ENCODE measurements at regions of chr10 and their contacts with region 1.

Region 1: GRCh38 chr10:73576178-73576889 is 14.8 kb downstream of the USP54 start:
- DNase-seq: peak; percentile 52 to 59
- ATAC-seq: peak; percentile 82 to 85
- H3K4me3 ChIP-seq: peak overlapping the region; percentile 56 to 83 (median 68)
- H3K27ac ChIP-seq: peak overlapping the region; percentile 86 to 91 (median 88)
- H3K4me1 ChIP-seq: peaks cover 34 to 36% of the 10 kb centered on the region in 2 donors
- H3K27me3 ChIP-seq: no peaks in the 10 kb centered on the region
- CTCF ChIP-seq: no peak
- POLR2A ChIP-seq: peak; percentile 92 to 96

Region 2: GRCh38 chr10:73529089-73529832 is 47.1 kb before region 1 on chr10:
- in situ Hi-C with region 1: no loop called
- intact Hi-C with region 1: loop called (anchors 2 kb)
- DNase-seq: peak; percentile 15 to 65
- ATAC-seq: peak; percentile 67 to 91
- H3K4me3 ChIP-seq: no peak overlapping the region
- H3K27ac ChIP-seq: peak overlapping the region; percentile 51 to 78 (median 58)
- H3K4me1 ChIP-seq: peaks cover 18 to 25% of the 10 kb centered on the region in 2 donors
- H3K27me3 ChIP-seq: no peaks in the 10 kb centered on the region
- CTCF ChIP-seq: peak; percentile 77 to 89 (median 86)
- POLR2A ChIP-seq: no peak

Region 3: DNA sequence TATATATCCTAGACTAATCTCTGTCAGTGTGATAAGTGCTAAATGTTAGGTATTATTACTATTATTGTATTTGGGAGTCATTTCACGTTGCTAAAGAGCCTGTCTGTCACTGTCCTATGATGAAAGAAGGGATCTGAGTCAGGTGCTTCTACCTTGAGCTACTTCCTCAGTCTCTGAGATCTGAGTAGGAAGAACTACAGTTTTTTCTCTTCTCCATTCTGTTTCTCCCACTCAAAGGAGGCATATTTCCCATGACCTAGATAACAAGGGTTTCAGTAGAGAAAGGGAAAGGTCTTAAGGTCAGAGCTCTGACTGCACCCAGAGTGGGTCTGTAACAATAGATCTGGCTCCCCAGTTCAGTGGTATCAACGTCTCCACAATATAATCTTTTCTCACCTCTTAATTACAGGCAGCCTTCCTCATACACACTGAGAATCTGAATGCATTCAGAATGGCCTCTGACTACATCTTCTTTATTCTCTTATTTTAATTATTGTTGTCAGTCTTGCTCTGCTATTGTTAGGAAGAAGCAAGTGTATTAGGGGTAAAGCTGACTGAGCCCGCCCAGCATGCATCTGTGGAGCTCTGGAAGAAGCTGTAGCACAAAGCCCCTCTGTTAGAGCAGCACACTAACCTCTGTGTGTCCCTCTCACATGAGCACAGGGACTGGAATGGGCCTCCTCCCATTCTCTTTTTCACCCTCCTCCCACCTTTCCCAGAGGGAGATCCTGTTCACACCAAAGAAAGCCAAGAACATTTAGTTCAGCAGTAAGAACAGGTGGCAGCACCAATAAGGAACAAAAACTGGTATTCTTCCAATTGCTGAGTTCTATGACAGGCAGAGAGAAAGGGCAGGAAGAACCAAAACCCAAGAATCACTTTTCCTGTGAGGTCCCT is 23.3 kb before region 1 on chr10:
- in situ Hi-C with region 1: no loop called
- intact Hi-C with region 1: loop called (anchors 1 kb)
- DNase-seq: peak; percentile 73 to 87
- ATAC-seq: peak; percentile 94
- H3K4me3 ChIP-seq: peak overlapping the region; percentile 30 to 45 (median 40)
- H3K27ac ChIP-seq: peak overlapping the region; percentile 95 to 98 (median 97)
- H3K4me1 ChIP-seq: peaks cover 64 to 85% of the 10 kb centered on the region in 2 donors
- H3K27me3 ChIP-seq: no peaks in the 10 kb centered on the region
- CTCF ChIP-seq: no peak
- POLR2A ChIP-seq: peak; percentile 56 to 61

Region 4: GRCh38 chr10:73625884-73626752 is 49.8 kb after region 1 on chr10:
- in situ Hi-C with region 1: loop called in 1 of 4 experiments (anchors 10 kb)
- intact Hi-C with region 1: loop called (anchors 2 kb)
- DNase-seq: peak; percentile 89 to 94
- ATAC-seq: peak; percentile 97 to 99
- H3K4me3 ChIP-seq: peak overlapping the region; percentile 61 to 98 (median 90)
- H3K27ac ChIP-seq: peak overlapping the region; percentile 79 to 96 (median 83)
- H3K4me1 ChIP-seq: peaks cover 14 to 17% of the 10 kb centered on the region in 2 donors
- H3K27me3 ChIP-seq: no peaks in the 10 kb centered on the region
- CTCF ChIP-seq: no peak
- POLR2A ChIP-seq: peak in 1 of 2 donors; percentile 54

Region 5: GRCh38 chr10:73634421-73634820 is 58.1 kb after region 1 on chr10:
- in situ Hi-C with region 1: loop called in 1 of 4 experiments (anchors 10 kb)
- intact Hi-C with region 1: no loop called
- DNase-seq: no peak
- ATAC-seq: no peak
- H3K4me3 ChIP-seq: peak overlapping the region in 2 of 4 donors; percentile 23 to 45
- H3K27ac ChIP-seq: peak overlapping the region; percentile 96 to 99 (median 98)
- H3K4me1 ChIP-seq: peaks cover 49 to 58% of the 10 kb centered on the region in 2 donors
- H3K27me3 ChIP-seq: no peaks in the 10 kb centered on the region
- CTCF ChIP-seq: no peak
- POLR2A ChIP-seq: no peak

Region 6: GRCh38 chr10:73644015-73644743 is 67.8 kb after region 1 on chr10:
- in situ Hi-C with region 1: loop called in 2 of 4 experiments (anchors 10 kb)
- intact Hi-C with region 1: loop called (anchors 2 kb)
- DNase-seq: peak in 1 of 2 donors; percentile 9
- ATAC-seq: peak; percentile 31 to 32
- H3K4me3 ChIP-seq: peak overlapping the region in 1 of 4 donors; percentile 18
- H3K27ac ChIP-seq: peak overlapping the region; percentile 96 to 99 (median 98)
- H3K4me1 ChIP-seq: peaks cover 77 to 81% of the 10 kb centered on the region in 2 donors
- H3K27me3 ChIP-seq: no peaks in the 10 kb centered on the region
- CTCF ChIP-seq: peak; percentile 88 to 96 (median 90)
- POLR2A ChIP-seq: no peak

Region 7: DNA sequence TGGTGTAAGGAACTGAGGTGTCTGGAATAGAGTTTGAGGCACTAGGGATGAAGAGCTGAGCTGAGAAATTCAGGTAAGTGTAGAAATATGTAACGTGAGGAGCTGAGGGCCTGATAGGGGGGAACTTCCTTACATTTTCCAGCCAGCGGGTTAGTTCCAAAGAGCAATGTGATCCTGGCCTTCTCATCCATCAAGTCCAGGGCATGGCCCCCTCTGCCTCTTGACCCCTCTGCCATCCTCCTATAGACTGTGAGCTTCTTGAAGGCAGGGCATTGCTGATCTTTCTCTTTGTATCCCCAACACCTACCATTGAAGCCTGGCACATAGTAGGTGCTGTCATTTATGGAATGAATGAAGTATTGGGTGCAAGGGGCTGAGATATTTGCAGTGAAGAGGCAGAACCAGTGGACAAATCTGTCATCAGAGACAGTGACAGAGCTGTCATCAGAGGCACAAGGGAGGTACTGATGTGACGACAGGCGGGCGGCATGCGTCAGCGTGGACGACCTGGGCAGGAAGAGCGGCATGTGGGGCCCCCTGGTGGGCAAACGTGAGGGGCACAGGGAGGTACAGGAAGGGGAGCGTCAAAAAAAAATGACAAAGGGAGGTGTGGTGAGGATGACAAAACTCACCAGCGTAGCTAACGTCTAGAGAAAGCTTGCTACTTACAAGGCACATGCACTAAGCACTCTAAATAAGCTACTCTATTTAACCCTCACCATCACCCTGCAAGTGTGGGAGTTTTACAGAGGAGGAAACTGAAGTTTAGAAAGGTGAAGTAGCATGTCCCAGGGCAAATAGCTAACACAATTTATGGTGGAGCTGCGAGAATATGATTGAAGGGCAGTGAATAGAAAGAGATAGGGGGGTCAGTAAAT is 303.2 kb after region 1 on chr10:
- in situ Hi-C with region 1: no loop called
- intact Hi-C with region 1: loop called (anchors 10 kb)
- DNase-seq: peak; percentile 69 to 84
- ATAC-seq: peak; percentile 76 to 77
- H3K4me3 ChIP-seq: no peak overlapping the region
- H3K27ac ChIP-seq: peak overlapping the region in 3 of 4 donors; percentile 45 to 55 (median 47)
- H3K4me1 ChIP-seq: peaks cover 16 to 23% of the 10 kb centered on the region in 2 donors
- H3K27me3 ChIP-seq: no peaks in the 10 kb centered on the region
- CTCF ChIP-seq: peak; percentile 88 to 98 (median 97)
- POLR2A ChIP-seq: no peak

Region 8: GRCh38 chr10:74282151-74282850 is 706.0 kb after region 1 on chr10:
- in situ Hi-C with region 1: no loop called
- intact Hi-C with region 1: no loop called
- DNase-seq: no peak
- ATAC-seq: no peak
- H3K4me3 ChIP-seq: no peak overlapping the region
- H3K27ac ChIP-seq: no peak overlapping the region
- H3K4me1 ChIP-seq: no peaks in the 10 kb centered on the region
- H3K27me3 ChIP-seq: no peaks in the 10 kb centered on the region
- CTCF ChIP-seq: no peak
- POLR2A ChIP-seq: no peak

Measured in gastrocnemius medialis (tissue), 4 donors.